ENCODE measurements at regions of chr1 and their contacts with region 1.

Region 1: DNA sequence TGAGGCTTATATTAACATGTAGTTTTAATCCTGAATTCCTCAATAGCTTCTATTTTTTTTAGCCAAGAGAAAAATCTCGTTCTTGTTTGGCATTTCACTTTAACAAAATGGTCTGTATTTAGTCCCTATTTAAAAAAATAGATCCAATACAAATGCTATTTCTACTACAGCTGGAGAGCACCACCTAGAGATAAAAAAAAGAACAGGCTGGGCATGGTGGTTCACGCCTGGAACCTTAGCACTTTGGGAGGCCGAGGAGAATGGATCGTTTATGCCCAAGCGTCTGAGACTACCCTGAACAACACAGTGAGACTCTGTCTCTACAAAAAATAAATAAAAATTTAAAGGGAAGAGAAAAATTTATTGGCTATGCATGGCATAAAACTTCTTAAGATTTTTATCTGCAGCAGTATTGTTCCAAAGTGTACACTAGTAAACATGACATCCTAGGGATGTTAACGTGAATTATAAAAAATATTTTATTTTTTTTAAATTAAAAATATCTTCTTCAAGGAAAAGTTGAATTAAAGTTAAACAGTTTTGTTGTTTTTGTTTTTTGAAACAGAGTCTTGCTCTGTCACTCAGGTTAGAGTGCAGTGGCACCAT is 4.4 kb downstream of the ST7L start:
- DNase-seq: peak; percentile 54
- H3K4me3 ChIP-seq: no peak overlapping the region
- H3K27ac ChIP-seq: no peak overlapping the region
- H3K4me1 ChIP-seq: peaks cover 12% of the 10 kb centered on the region
- CTCF ChIP-seq: peak; percentile 84

Region 2: GRCh38 chr1:112395821-112396652 is 218.5 kb before region 1 on chr1 and contains the start of gene CTTNBP2NL:
- CTCF ChIA-PET with region 1: no interaction called
- POLR2A ChIA-PET with region 1: interaction called, 11 read pairs
- intact Hi-C with region 1: loop called (anchors 1 kb)
- DNase-seq: peak; percentile 85
- H3K4me3 ChIP-seq: peak within 1 kb of the TSS; percentile 89
- H3K27ac ChIP-seq: no peak within 1 kb of the TSS
- H3K4me1 ChIP-seq: peaks cover 61% of the 10 kb centered on the region
- CTCF ChIP-seq: no peak
- total RNA-seq, gene CTTNBP2NL: 1.5 and 2.1 TPM in 2 replicates

Region 3: DNA sequence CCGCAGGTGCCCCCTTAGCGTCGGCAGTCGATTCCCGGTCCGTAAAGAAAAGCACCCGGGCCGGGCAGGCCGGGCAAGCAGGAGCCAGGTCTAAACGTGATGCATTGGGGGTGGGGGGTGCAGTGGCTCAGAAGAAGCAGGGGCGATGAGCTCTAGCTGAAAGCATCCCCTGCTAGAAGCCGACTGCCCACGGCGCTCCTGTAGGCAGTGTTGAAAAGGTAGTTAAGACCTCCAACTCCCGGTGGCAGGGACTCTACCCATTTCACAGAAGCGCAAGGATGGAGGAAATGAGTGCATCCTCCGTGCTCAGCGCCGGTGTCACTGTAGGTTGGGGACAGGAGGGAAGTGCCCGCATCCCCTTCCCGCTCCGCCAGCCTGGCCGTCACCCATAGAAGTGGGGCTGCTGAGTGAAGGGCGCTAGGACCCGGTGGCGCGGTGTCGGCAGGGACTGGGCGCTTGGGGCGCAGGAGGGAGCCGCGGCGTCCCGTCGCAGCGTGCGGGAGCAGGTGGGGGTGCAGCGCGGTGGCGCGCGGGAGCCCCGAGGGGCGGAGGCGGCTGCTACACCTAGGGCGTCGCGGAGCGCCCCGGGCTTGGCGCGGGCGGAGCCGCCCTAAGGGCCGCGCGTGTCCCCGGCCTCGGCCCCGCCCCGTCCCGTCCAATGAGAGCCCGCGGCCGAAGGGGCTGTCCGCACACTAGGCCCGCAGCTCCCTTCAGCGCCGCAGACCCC is 106.1 kb before region 1 on chr1 and contains the start of gene WNT2B:
- CTCF ChIA-PET with region 1: no interaction called
- POLR2A ChIA-PET with region 1: no interaction called
- intact Hi-C with region 1: loop called (anchors 2 kb)
- DNase-seq: peak; percentile 55
- H3K4me3 ChIP-seq: peak within 1 kb of the TSS; percentile 68
- H3K27ac ChIP-seq: no peak within 1 kb of the TSS
- H3K4me1 ChIP-seq: peaks cover 42% of the 10 kb centered on the region
- CTCF ChIP-seq: no peak
- total RNA-seq, gene WNT2B: 0.32 and 0.39 TPM in 2 replicates

Region 4: GRCh38 chr1:113007706-113008364 is 393.3 kb after region 1 on chr1:
- CTCF ChIA-PET with region 1: no interaction called
- POLR2A ChIA-PET with region 1: no interaction called
- intact Hi-C with region 1: no loop called
- DNase-seq: no peak
- H3K4me3 ChIP-seq: no peak overlapping the region
- H3K27ac ChIP-seq: no peak overlapping the region
- H3K4me1 ChIP-seq: no peaks in the 10 kb centered on the region
- CTCF ChIP-seq: no peak